ENCODE measurements at regions of chr10 and their contacts with region 1.

Region 1: GRCh38 chr10:91632671-91633550 is at the start of gene PPP1R3C:
- DNase-seq: peak; percentile 83
- ATAC-seq: peak; percentile 95
- H3K4me3 Mint-ChIP-seq: peak within 1 kb of the TSS; percentile 65
- H3K27ac Mint-ChIP-seq: no peak within 1 kb of the TSS
- H3K4me1 Mint-ChIP-seq: peaks cover 8% of the 10 kb centered on the region
- H3K27me3 Mint-ChIP-seq: peaks cover 59% of the 10 kb centered on the region
- total RNA-seq, gene PPP1R3C: 0.63 to 0.71 TPM

Region 2: GRCh38 chr10:91227576-91227975 is 405.3 kb before region 1 on chr10:
- CTCF ChIA-PET with region 1: no interaction called
- POLR2A ChIA-PET with region 1: no interaction called
- intact Hi-C with region 1: no loop called
- DNase-seq: no peak
- ATAC-seq: peak; percentile 36
- H3K4me3 Mint-ChIP-seq: no peak overlapping the region
- H3K27ac Mint-ChIP-seq: no peak overlapping the region
- H3K4me1 Mint-ChIP-seq: peaks cover 33% of the 10 kb centered on the region
- H3K27me3 Mint-ChIP-seq: no peaks in the 10 kb centered on the region

Region 3: GRCh38 chr10:91389636-91390512 is 243.0 kb before region 1 on chr10:
- CTCF ChIA-PET with region 1: interaction called, 47 read pairs
- POLR2A ChIA-PET with region 1: no interaction called
- intact Hi-C with region 1: loop called (anchors 1 kb)
- DNase-seq: no peak
- ATAC-seq: peak; percentile 81
- H3K4me3 Mint-ChIP-seq: no peak overlapping the region
- H3K27ac Mint-ChIP-seq: no peak overlapping the region
- H3K4me1 Mint-ChIP-seq: peaks cover 6% of the 10 kb centered on the region
- H3K27me3 Mint-ChIP-seq: peaks cover 18% of the 10 kb centered on the region

Region 4: GRCh38 chr10:91493313-91493712 is 139.6 kb before region 1 on chr10:
- CTCF ChIA-PET with region 1: interaction called, 11 read pairs
- POLR2A ChIA-PET with region 1: no interaction called
- intact Hi-C with region 1: loop called in 1 of 2 experiments (anchors 1 kb)
- DNase-seq: no peak
- ATAC-seq: no peak
- H3K4me3 Mint-ChIP-seq: no peak overlapping the region
- H3K27ac Mint-ChIP-seq: no peak overlapping the region
- H3K4me1 Mint-ChIP-seq: no peaks in the 10 kb centered on the region
- H3K27me3 Mint-ChIP-seq: no peaks in the 10 kb centered on the region

Region 5: DNA sequence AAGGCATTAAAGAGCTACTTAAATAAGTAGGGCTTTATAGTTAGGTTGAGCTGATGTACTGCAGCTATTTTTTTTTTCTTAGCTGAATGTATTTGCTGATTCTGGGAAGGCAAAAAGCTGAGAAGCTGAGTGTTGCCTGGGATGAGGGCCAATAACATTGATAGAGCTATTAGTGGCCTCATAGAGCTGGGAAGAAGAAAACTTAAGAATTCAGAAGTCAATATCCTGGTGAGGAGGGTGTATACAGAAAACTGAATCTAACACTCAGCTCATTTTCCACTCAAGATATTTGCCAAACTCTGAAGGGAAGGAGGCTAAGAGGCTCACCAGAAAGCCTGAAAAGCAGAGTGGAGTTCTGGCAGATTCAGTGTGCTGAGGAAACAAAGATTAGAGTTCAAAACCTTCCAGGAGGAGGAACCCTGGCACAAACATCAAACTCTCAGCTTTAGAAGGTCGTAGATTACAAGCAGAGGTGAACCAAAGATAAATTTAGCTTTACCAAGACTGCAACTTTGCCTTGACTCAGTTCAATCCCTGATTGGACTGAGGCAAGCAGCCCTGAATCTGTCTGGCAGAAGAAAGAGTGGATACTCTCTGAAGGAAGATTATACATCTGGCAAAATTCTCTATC is 11.3 kb before region 1 on chr10:
- CTCF ChIA-PET with region 1: interaction called, 41 read pairs
- POLR2A ChIA-PET with region 1: interaction called, 3 read pairs
- intact Hi-C with region 1: no loop called
- DNase-seq: no peak
- ATAC-seq: no peak
- H3K4me3 Mint-ChIP-seq: no peak overlapping the region
- H3K27ac Mint-ChIP-seq: no peak overlapping the region
- H3K4me1 Mint-ChIP-seq: no peaks in the 10 kb centered on the region
- H3K27me3 Mint-ChIP-seq: peaks cover 20% of the 10 kb centered on the region

Measured in activated CD4-positive, alpha-beta T cell treated with anti-CD3 and anti-CD28 coated beads for 36 hours (primary cell).